ENCODE measurements at regions of chr6 and their contacts with region 1.

Region 1: DNA sequence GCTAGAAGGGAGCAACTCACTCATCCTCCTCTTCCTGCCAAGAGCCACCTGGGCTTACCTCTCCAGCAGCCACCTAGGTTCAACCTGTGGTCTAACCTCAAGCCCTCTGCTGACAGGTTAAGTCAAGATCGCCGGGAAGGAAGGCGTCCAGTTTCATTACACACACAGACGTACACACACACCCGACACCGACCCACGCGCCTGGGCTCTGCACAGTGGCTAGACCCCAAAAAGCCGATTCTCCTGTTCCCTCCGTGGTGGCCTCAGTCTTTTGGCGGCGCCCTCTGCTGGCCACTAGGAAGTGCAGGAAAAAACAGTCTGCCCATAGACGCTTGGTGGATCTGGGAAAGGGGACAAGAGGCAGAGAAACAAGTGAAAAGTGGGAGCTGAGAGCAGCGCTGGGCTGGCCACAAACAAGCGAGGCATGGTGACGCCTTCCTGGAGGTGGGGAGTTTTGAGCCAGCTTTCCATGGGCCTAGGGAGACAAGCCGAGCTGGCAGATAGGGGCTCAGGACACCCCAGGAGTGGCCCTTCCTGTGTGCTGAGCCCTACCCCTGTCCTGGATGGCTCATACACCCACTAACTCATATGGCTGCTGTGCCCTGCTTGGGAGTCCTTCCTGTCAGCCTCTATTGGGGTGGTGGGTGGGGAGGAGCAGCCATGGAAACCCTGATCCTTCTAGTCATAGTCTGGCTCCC is 52.7 kb downstream of the MRPL14 start:
- DNase-seq: peak; percentile 80 to 90 (median 90)
- ATAC-seq: peak; percentile 61 to 67
- H3K4me3 ChIP-seq: no peak overlapping the region
- H3K27ac ChIP-seq: peak overlapping the region; percentile 69
- H3K4me1 ChIP-seq: peaks cover 14% of the 10 kb centered on the region
- H3K27me3 ChIP-seq: no peaks in the 10 kb centered on the region

Region 2: GRCh38 chr6:43667245-43668150 is 407.1 kb before region 1 on chr6:
- intact Hi-C with region 1: loop called in 3 of 4 experiments (anchors 5 kb)
- DNase-seq: peak; percentile 76 to 93 (median 92)
- ATAC-seq: peak; percentile 33 to 56
- H3K4me3 ChIP-seq: no peak overlapping the region
- H3K27ac ChIP-seq: peak overlapping the region; percentile 61
- H3K4me1 ChIP-seq: peaks cover 21% of the 10 kb centered on the region
- H3K27me3 ChIP-seq: no peaks in the 10 kb centered on the region

Region 3: GRCh38 chr6:43723737-43724295 is 350.8 kb before region 1 on chr6:
- intact Hi-C with region 1: loop called in 2 of 4 experiments (anchors 2 to 5 kb)
- DNase-seq: peak; percentile 67 to 85 (median 79)
- ATAC-seq: peak; percentile 63 to 72
- H3K4me3 ChIP-seq: no peak overlapping the region
- H3K27ac ChIP-seq: no peak overlapping the region
- H3K4me1 ChIP-seq: no peaks in the 10 kb centered on the region
- H3K27me3 ChIP-seq: no peaks in the 10 kb centered on the region

Region 4: GRCh38 chr6:43758617-43759050 is 316.0 kb before region 1 on chr6:
- intact Hi-C with region 1: loop called in 1 of 4 experiments (anchors 5 kb)
- DNase-seq: peak in 1 of 3 donors; percentile 66
- ATAC-seq: peak; percentile 50 to 55
- H3K4me3 ChIP-seq: no peak overlapping the region
- H3K27ac ChIP-seq: no peak overlapping the region
- H3K4me1 ChIP-seq: no peaks in the 10 kb centered on the region
- H3K27me3 ChIP-seq: no peaks in the 10 kb centered on the region

Region 5: DNA sequence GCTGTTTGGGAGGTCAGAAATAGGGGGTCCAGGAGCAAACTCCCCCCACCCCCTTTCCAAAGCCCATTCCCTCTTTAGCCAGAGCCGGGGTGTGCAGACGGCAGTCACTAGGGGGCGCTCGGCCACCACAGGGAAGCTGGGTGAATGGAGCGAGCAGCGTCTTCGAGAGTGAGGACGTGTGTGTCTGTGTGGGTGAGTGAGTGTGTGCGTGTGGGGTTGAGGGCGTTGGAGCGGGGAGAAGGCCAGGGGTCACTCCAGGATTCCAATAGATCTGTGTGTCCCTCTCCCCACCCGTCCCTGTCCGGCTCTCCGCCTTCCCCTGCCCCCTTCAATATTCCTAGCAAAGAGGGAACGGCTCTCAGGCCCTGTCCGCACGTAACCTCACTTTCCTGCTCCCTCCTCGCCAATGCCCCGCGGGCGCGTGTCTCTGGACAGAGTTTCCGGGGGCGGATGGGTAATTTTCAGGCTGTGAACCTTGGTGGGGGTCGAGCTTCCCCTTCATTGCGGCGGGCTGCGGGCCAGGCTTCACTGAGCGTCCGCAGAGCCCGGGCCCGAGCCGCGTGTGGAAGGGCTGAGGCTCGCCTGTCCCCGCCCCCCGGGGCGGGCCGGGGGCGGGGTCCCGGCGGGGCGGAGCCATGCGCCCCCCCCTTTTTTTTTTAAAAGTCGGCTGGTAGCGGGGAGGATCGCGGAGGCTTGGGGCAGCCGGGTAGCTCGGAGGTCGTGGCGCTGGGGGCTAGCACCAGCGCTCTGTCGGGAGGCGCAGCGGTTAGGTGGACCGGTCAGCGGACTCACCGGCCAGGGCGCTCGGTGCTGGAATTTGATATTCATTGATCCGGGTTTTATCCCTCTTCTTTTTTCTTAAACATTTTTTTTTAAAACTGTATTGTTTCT is 304.8 kb before region 1 on chr6 and contains the start of gene VEGFA:
- intact Hi-C with region 1: loop called (anchors 2 to 5 kb)
- DNase-seq: peak; percentile 91 to 97 (median 96)
- ATAC-seq: peak; percentile 83 to 84
- H3K4me3 ChIP-seq: peak within 1 kb of the TSS; percentile 64
- H3K27ac ChIP-seq: peak within 1 kb of the TSS; percentile 95
- H3K4me1 ChIP-seq: peaks cover 5% of the 10 kb centered on the region
- H3K27me3 ChIP-seq: no peaks in the 10 kb centered on the region
- total RNA-seq, gene VEGFA: 163 to 296 (median 219) TPM

Region 6: DNA sequence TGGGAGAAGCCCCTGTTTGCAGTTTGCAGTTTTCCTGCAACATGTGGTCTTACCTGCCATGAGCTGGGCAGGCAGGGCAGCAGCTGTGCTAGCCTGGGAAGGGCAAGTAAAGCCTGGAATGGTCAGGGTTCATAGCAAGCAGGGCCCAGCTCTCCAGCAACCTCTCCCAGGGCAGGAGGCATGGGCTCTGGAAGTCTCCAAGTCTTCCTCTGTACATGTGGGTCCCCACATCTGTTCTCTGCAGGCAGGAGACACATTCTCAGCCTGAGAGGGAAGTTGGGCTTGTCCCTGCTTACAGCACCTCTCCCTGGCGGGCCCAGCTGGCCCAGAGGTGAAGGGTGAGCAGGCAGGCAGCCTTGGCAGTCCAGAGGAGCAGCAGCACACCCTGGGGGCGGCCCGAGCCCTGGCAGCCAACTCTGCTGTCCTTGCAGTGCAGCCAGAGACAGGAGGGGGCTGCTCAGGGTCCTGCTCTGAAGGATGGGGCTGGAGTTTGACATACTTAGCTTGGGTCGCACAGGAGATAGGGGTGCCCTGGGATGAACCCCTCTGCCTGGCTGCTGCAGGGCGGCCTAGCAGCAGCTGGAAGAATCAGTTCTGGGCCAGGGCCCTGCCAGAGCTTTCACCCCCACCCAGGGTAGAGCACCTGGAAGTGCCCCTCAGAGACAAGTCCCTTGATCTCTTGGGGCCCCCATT is 123.4 kb before region 1 on chr6:
- intact Hi-C with region 1: loop called in 1 of 4 experiments (anchors 5 kb)
- DNase-seq: peak; percentile 57 to 86 (median 83)
- ATAC-seq: peak; percentile 61 to 66
- H3K4me3 ChIP-seq: no peak overlapping the region
- H3K27ac ChIP-seq: peak overlapping the region; percentile 1
- H3K4me1 ChIP-seq: peaks cover 2% of the 10 kb centered on the region
- H3K27me3 ChIP-seq: no peaks in the 10 kb centered on the region

Region 7: GRCh38 chr6:44002593-44003344 is 71.8 kb before region 1 on chr6:
- intact Hi-C with region 1: loop called in 3 of 4 experiments (anchors 5 to 10 kb)
- DNase-seq: peak; percentile 53 to 85 (median 76)
- ATAC-seq: peak; percentile 15 to 47
- H3K4me3 ChIP-seq: peak overlapping the region; percentile 21
- H3K27ac ChIP-seq: peak overlapping the region; percentile 91
- H3K4me1 ChIP-seq: no peaks in the 10 kb centered on the region
- H3K27me3 ChIP-seq: no peaks in the 10 kb centered on the region